Left lung (tissue), 14 donors: ENCODE measurements at regions of chr11 and their contacts with region 1.

Region 1: GRCh38 chr11:48109046-48109666 is 107.5 kb upstream of the OR4B1 start:
- DNase-seq: no peak
- ATAC-seq: peak; percentile 73
- H3K4me3 ChIP-seq: no peak overlapping the region
- H3K27ac ChIP-seq: peak overlapping the region in 1 of 2 donors; percentile 58
- H3K4me1 ChIP-seq: peaks cover 8 to 56% of the 10 kb centered on the region in 2 donors
- H3K27me3 ChIP-seq: no peaks in the 10 kb centered on the region
- CTCF ChIP-seq: peak in 1 of 2 donors; percentile 34

Region 2: GRCh38 chr11:47917643-47918369 is 191.3 kb before region 1 on chr11:
- intact Hi-C with region 1: no loop called
- DNase-seq: peak; percentile 78 to 97 (median 92)
- ATAC-seq: peak; percentile 89
- H3K4me3 ChIP-seq: peak overlapping the region in 1 of 2 donors; percentile 17
- H3K27ac ChIP-seq: peak overlapping the region; percentile 80 to 87
- H3K4me1 ChIP-seq: peaks cover 9 to 55% of the 10 kb centered on the region in 2 donors
- H3K27me3 ChIP-seq: no peaks in the 10 kb centered on the region
- CTCF ChIP-seq: no peak

Region 3: DNA sequence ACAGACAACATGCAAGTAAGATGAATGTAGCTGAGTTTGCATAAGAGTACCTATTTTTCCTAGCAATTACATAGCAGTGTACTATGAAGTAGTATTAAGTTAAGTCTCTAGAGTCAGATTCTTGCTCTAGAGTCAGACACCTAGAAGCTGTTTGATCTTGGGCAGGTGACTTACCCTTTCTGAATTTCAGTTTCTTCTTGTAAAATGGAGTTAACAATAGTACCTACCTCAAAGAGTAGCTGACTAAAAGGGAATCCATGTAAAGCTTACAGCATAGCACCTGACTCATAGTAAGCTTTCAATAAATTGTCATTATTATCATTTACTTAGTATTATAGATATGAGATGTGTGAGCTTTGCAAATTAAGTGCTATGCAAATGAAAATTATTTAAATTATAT is 176.6 kb before region 1 on chr11:
- intact Hi-C with region 1: loop called (anchors 5 to 10 kb)
- DNase-seq: no peak
- ATAC-seq: no peak
- H3K4me3 ChIP-seq: no peak overlapping the region
- H3K27ac ChIP-seq: no peak overlapping the region
- H3K4me1 ChIP-seq: peaks cover 4 to 23% of the 10 kb centered on the region in 2 donors
- H3K27me3 ChIP-seq: no peaks in the 10 kb centered on the region
- CTCF ChIP-seq: no peak

Region 4: GRCh38 chr11:47938791-47939560 is 170.2 kb before region 1 on chr11:
- intact Hi-C with region 1: loop called (anchors 5 to 10 kb)
- DNase-seq: no peak
- ATAC-seq: no peak
- H3K4me3 ChIP-seq: no peak overlapping the region
- H3K27ac ChIP-seq: no peak overlapping the region
- H3K4me1 ChIP-seq: peaks cover 12 to 44% of the 10 kb centered on the region in 2 donors
- H3K27me3 ChIP-seq: no peaks in the 10 kb centered on the region
- CTCF ChIP-seq: no peak